HAP-1 (cell line): ENCODE measurements at regions of chr3 and their contacts with region 1.

Region 1: GRCh38 chr3:62558549-62559112 is 185.3 kb upstream of the FEZF2 start:
- DNase-seq: peak; percentile 54 to 69
- H3K4me3 ChIP-seq: no peak overlapping the region
- H3K4me1 ChIP-seq: no peaks in the 10 kb centered on the region
- H3K27me3 ChIP-seq: peaks cover 2% of the 10 kb centered on the region; the same call in 1 of the 2 replicates

Region 2: GRCh38 chr3:62201438-62202035 is 357.1 kb before region 1 on chr3:
- in situ Hi-C with region 1: loop called (anchors 5 kb)
- DNase-seq: peak; percentile 45 to 50
- H3K4me3 ChIP-seq: no peak overlapping the region
- H3K4me1 ChIP-seq: no peaks in the 10 kb centered on the region
- H3K27me3 ChIP-seq: no peaks in the 10 kb centered on the region

Region 3: DNA sequence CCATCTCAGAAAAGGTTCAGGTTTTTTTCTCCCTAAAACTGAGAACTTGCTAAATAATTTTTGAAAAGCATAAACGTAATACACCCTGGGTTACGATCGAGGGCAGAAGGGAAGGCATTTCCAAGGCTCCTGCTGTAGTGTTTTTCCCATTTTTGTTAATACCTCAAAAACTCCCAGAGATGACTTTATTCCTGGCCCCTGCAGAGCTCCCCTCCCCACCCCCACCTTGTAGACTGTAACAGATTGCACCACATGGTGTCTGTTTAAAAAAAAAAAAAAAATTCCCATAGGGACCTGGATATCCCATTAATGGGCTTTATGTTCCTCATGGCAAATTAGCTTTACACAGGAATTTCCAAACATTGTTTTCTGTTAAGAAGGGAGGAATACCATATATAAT is 223.4 kb before region 1 on chr3:
- in situ Hi-C with region 1: loop called (anchors 5 kb)
- DNase-seq: no peak
- H3K4me3 ChIP-seq: no peak overlapping the region
- H3K4me1 ChIP-seq: 0 out of 2 replicates have a peak, but pooled peaks cover 7% of the 10 kb centered on the region
- H3K27me3 ChIP-seq: peaks cover 50% of the 10 kb centered on the region